Heart right ventricle (tissue), 16 donors: ENCODE measurements at regions of chr11 and their contacts with region 1.

Region 1: DNA sequence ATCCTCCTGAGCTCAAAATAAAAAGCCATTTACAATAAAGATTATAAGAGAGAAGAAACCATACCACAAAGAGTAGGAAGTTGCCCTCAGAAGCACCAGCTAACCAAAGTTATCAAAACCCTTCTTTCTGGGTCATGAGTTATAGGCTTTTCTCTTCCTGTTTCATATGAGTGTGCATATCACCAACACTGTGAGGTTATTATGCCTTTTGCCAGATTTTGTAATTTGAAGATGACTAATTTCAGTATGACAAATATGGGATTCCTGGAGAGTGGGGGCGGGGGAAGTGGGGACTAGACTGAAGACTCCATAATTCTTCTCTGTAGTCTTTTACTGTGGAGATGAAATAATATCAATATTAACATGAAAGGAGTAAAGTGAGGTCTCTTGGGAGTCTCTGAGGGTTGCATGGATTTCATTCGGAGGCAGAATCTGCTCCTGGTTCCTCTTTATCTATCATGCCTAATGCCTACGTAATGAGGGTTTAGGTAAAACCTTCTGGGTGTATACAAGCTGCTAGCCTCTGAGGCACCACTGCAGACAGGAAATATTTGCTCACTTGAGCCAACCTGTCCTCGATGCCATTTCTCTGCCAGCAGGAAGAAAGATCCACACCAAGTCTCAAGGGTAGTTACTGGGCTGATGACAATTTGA is 2.1 kb downstream of the LPXN start:
- DNase-seq: peak in 1 of 2 donors; percentile 12
- ATAC-seq: peak in 1 of 8 donors; percentile 21
- H3K4me3 ChIP-seq: peak overlapping the region in 1 of 10 donors; percentile 49
- H3K27ac ChIP-seq: peak overlapping the region in 6 of 10 donors; percentile 7 to 99 (median 30)
- H3K4me1 ChIP-seq: peaks cover 14 to 54% (median 27%) of the 10 kb centered on the region in 9 donors
- H3K27me3 ChIP-seq: no peaks in the 10 kb centered on the region
- CTCF ChIP-seq: no peak

Region 2: GRCh38 chr11:58675334-58676155 is 102.0 kb after region 1 on chr11:
- intact Hi-C with region 1: loop called in 9 of 10 experiments (anchors 2 to 10 kb)
- DNase-seq: peak; percentile 62 to 81
- ATAC-seq: peak; percentile 83 to 94 (median 90)
- H3K4me3 ChIP-seq: no peak overlapping the region
- H3K27ac ChIP-seq: no peak overlapping the region
- H3K4me1 ChIP-seq: no peaks in the 10 kb centered on the region
- H3K27me3 ChIP-seq: peaks cover 0 to 24% (median 14%) of the 10 kb centered on the region in 7 donors
- CTCF ChIP-seq: peak; percentile 73 to 97 (median 94)